RWPE1 (cell line): ENCODE measurements at regions of chr16 and their contacts with region 1.

Region 1: GRCh38 chr16:69709456-69710084 is 16.8 kb downstream of the NQO1 start:
- DNase-seq: peak; percentile 54
- H3K27ac ChIP-seq: peak overlapping the region; percentile 67
- CTCF ChIP-seq: peak; percentile 74

Region 2: GRCh38 chr16:69688589-69688988 is 21.0 kb before region 1 on chr16:
- CTCF ChIA-PET with region 1: no interaction called
- POLR2A ChIA-PET with region 1: no interaction called
- DNase-seq: no peak
- H3K27ac ChIP-seq: no peak overlapping the region
- CTCF ChIP-seq: no peak

Region 3: GRCh38 chr16:69754469-69755310 is 45.1 kb after region 1 on chr16 and contains the start of gene NOB1:
- CTCF ChIA-PET with region 1: interaction called, 14 read pairs
- POLR2A ChIA-PET with region 1: no interaction called
- DNase-seq: peak; percentile 95
- H3K27ac ChIP-seq: peak within 1 kb of the TSS; percentile 74
- CTCF ChIP-seq: peak; percentile 96